ENCODE measurements at regions of chr13 and their contacts with region 1.

Region 1: GRCh38 chr13:41652727-41653361 is 195.5 kb downstream of the RGCC start:
- DNase-seq: no peak
- ATAC-seq: no peak
- H3K4me3 ChIP-seq: no peak overlapping the region
- H3K27ac ChIP-seq: no peak overlapping the region
- H3K4me1 ChIP-seq: no peaks in the 10 kb centered on the region
- H3K27me3 ChIP-seq: no peaks in the 10 kb centered on the region
- CTCF ChIP-seq: peak; percentile 15 to 53 (median 43); a peak in 5 of 6 replicates
- EP300 ChIP-seq: no peak
- POLR2A ChIP-seq: no peak
- RAD21 ChIP-seq: peak; percentile 91

Region 2: GRCh38 chr13:41352935-41353840 is 299.7 kb before region 1 on chr13:
- CTCF ChIA-PET with region 1: interaction called, 11 read pairs
- POLR2A ChIA-PET with region 1: no interaction called
- RAD21 ChIA-PET with region 1: interaction called, 8 read pairs
- SMC1A ChIA-PET with region 1: interaction called, 3 read pairs
- in situ Hi-C with region 1: no loop called
- intact Hi-C with region 1: loop called (anchors 5 kb)
- DNase-seq: peak; percentile 30
- ATAC-seq: peak; percentile 96
- H3K4me3 ChIP-seq: no peak overlapping the region
- H3K27ac ChIP-seq: no peak overlapping the region
- H3K4me1 ChIP-seq: no peaks in the 10 kb centered on the region
- H3K27me3 ChIP-seq: no peaks in the 10 kb centered on the region
- CTCF ChIP-seq: peak; percentile 58 to 79 (median 71)
- EP300 ChIP-seq: no peak
- POLR2A ChIP-seq: no peak
- RAD21 ChIP-seq: peak; percentile 65

Region 3: DNA sequence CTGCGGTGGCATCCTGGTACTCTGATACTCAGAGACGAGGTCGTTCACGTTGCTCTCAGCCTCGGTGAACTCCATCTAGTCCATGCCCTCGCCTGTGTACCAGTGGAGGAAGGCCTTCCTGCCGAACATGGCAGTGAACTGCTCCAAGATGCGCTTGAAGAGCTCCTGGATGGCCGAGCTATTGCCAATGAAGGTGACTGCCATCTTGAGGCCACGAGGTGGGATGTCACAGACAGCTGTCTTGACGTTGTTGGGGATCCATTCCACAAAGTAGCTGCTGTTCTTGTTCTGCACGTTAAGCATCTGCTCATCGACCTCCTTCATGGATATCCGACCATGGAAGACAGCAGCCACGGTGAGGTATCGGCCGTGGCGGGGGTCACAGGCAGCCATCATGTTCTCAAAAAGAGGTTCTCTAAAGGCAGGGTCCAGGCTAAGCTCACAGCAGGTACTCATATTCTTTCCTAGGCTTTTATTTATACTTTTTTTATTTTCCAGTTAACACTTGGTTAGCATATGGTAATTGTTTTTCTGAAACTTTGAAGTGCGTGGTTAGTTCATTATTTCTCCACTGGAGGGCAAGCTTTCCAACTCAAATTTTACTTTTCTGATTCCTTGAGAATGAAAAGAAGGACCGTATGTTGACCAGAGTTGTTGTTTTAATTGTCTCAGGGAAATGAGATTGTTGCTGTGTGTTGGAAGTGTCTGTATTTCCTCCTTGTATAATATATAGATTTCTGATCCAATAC is 267.9 kb before region 1 on chr13:
- CTCF ChIA-PET with region 1: interaction called, 14 read pairs
- POLR2A ChIA-PET with region 1: no interaction called
- RAD21 ChIA-PET with region 1: interaction called, 9 read pairs
- SMC1A ChIA-PET with region 1: interaction called, 9 read pairs
- in situ Hi-C with region 1: no loop called
- intact Hi-C with region 1: loop called (anchors 5 kb)
- DNase-seq: no peak
- ATAC-seq: no peak
- H3K4me3 ChIP-seq: no peak overlapping the region
- H3K27ac ChIP-seq: no peak overlapping the region
- H3K4me1 ChIP-seq: no peaks in the 10 kb centered on the region
- H3K27me3 ChIP-seq: no peaks in the 10 kb centered on the region
- CTCF ChIP-seq: peak in 2 of 3 experiments; percentile 24 to 36; a peak in 2 of 6 replicates
- EP300 ChIP-seq: no peak
- POLR2A ChIP-seq: no peak
- RAD21 ChIP-seq: peak; percentile 39

Region 4: GRCh38 chr13:41411522-41411921 is 241.3 kb before region 1 on chr13:
- CTCF ChIA-PET with region 1: interaction called, 14 read pairs
- POLR2A ChIA-PET with region 1: no interaction called
- RAD21 ChIA-PET with region 1: interaction called, 4 read pairs
- SMC1A ChIA-PET with region 1: interaction called, 12 read pairs
- in situ Hi-C with region 1: no loop called
- intact Hi-C with region 1: loop called (anchors 5 kb)
- DNase-seq: no peak
- ATAC-seq: peak; percentile 44; the same call in 2 of the 3 replicates
- H3K4me3 ChIP-seq: no peak overlapping the region
- H3K27ac ChIP-seq: no peak overlapping the region
- H3K4me1 ChIP-seq: no peaks in the 10 kb centered on the region
- H3K27me3 ChIP-seq: no peaks in the 10 kb centered on the region; a peak in 1 of 4 replicates
- CTCF ChIP-seq: peak; percentile 4 to 33 (median 32); a peak in 3 of 6 replicates
- EP300 ChIP-seq: no peak
- POLR2A ChIP-seq: no peak
- RAD21 ChIP-seq: peak; percentile 74

Region 5: DNA sequence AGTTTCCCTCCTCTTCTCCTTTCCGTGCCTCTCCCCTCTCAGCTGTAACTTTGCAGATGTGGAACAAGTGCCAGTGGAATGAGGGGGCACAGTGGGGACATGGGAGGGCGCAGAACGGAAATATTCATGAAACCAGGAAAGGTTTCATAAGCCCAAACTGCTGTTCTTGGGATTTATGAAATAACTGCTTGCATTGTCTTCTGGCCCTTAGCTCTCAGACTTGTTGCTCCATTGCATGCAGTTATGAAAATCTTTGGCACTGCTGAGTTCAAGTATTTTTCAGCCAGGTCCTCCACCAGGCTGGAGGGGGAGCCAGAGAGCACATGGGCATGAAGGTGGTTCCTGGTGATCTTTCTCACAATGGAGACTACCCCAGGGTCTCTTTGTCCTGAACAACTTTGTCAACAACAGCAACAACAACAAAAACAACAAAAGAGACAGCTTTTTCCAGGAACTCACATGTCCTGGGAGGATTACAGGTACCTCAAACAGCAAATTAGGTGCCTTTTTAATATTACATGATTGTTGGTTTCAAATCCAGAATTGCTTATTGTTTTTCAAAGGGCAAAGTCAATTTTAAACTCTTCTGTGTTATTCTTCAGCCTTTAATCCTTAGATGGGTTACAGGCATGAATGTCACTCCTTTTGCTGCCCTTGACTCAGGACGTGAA is 193.9 kb before region 1 on chr13:
- CTCF ChIA-PET with region 1: interaction called, 21 read pairs
- POLR2A ChIA-PET with region 1: no interaction called
- RAD21 ChIA-PET with region 1: interaction called, 9 read pairs
- SMC1A ChIA-PET with region 1: interaction called, 24 read pairs
- in situ Hi-C with region 1: no loop called
- intact Hi-C with region 1: no loop called
- DNase-seq: no peak
- ATAC-seq: peak; percentile 59
- H3K4me3 ChIP-seq: peak overlapping the region; percentile 80; the same call in 1 of the 2 replicates
- H3K27ac ChIP-seq: no peak overlapping the region
- H3K4me1 ChIP-seq: peaks cover 51% of the 10 kb centered on the region
- H3K27me3 ChIP-seq: peaks cover 0 to 7% of the 10 kb centered on the region in 2 experiments; a peak in 2 of 4 replicates
- CTCF ChIP-seq: peak; percentile 64 to 90 (median 86)
- EP300 ChIP-seq: no peak
- POLR2A ChIP-seq: no peak
- RAD21 ChIP-seq: peak; percentile 64

Region 6: GRCh38 chr13:41520016-41520659 is 132.7 kb before region 1 on chr13:
- CTCF ChIA-PET with region 1: no interaction called
- POLR2A ChIA-PET with region 1: no interaction called
- RAD21 ChIA-PET with region 1: no interaction called
- SMC1A ChIA-PET with region 1: no interaction called
- in situ Hi-C with region 1: no loop called
- intact Hi-C with region 1: no loop called
- DNase-seq: no peak
- ATAC-seq: no peak
- H3K4me3 ChIP-seq: no peak overlapping the region
- H3K27ac ChIP-seq: no peak overlapping the region
- H3K4me1 ChIP-seq: no peaks in the 10 kb centered on the region
- H3K27me3 ChIP-seq: no peaks in the 10 kb centered on the region
- CTCF ChIP-seq: no peak
- EP300 ChIP-seq: no peak
- POLR2A ChIP-seq: no peak
- RAD21 ChIP-seq: no peak